CD4-positive, alpha-beta memory T cell (primary cell): ENCODE measurements at regions of chr2 and their contacts with region 1.

Region 1: DNA sequence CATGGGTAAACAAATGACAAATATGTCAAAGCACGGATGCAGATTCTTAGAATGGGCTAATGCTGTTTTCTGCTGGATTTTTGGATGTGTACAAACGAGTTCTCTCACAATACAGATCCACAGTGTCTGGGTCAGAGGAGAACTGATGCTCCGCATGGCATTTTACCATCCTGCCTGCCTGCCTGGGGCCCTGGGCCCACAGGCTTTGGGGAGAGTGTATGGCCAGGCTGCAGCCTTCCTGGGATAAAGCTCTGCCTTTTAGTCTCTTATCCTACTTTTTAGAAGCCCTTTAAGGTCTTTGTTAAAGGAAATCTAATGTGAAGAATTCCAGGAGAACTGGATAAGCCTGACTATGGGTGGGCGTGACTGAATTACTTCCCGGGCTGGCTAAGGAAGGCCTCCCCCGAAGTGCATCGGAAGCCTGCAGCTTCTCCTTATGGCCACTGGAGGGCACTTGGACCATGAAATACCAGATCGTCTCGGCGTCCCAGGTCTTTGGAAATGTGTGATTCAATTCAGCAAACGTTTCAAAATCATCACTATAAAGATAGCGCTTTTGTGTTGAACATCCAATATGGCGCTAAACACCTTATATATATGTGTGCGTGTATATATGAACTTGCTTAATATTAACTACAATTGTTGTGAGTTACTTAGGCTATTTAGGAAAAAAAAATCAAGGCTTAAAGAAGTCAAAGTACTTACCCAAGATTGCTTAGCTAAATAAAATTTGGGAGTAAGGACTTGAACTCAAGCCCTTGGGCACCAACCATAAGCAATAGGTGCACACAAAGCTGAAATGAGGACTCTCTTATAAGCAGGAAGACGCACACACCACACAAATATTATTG is 15.2 kb upstream of the DNPEP start:
- DNase-seq: peak; percentile 51 to 66 (median 58)
- H3K4me3 ChIP-seq: no peak overlapping the region
- H3K4me3 Mint-ChIP-seq: no peak overlapping the region
- H3K27ac ChIP-seq: no peak overlapping the region
- H3K27ac Mint-ChIP-seq: no peak overlapping the region
- H3K4me1 ChIP-seq: no peaks in the 10 kb centered on the region
- H3K4me1 Mint-ChIP-seq: peaks cover 0 to 7% (median 4%) of the 10 kb centered on the region in 4 donors
- H3K27me3 ChIP-seq: no peaks in the 10 kb centered on the region
- H3K27me3 Mint-ChIP-seq: peaks cover 2 to 4% of the 10 kb centered on the region in 2 donors

Region 2: DNA sequence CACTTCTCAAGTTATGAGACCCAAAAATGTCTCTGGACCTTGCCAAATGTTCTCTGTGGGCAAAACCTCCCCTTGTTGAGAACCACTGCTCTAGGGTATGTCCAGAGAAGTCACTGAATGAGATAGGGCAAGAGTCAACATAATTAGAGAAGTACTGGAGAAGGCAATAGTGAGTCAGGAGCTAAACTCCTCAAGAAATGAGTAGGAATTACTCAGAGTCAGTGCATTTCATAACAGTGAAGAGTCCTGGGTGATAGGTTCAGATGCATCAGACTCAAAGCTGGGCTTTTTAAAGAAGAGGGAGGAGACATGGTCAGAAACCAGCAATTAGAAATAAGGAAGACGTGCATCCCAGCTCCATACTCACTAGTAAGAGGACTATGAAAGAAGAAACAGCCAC is 303.6 kb before region 1 on chr2:
- CTCF ChIA-PET with region 1: no interaction called
- POLR2A ChIA-PET with region 1: no interaction called
- intact Hi-C with region 1: no loop called
- DNase-seq: no peak
- H3K4me3 ChIP-seq: no peak overlapping the region
- H3K4me3 Mint-ChIP-seq: no peak overlapping the region
- H3K27ac ChIP-seq: no peak overlapping the region
- H3K27ac Mint-ChIP-seq: no peak overlapping the region
- H3K4me1 ChIP-seq: no peaks in the 10 kb centered on the region
- H3K4me1 Mint-ChIP-seq: peaks cover 0 to 5% (median 0%) of the 10 kb centered on the region in 4 donors
- H3K27me3 ChIP-seq: no peaks in the 10 kb centered on the region
- H3K27me3 Mint-ChIP-seq: no peaks in the 10 kb centered on the region

Region 3: GRCh38 chr2:219433666-219434467 is 31.0 kb after region 1 on chr2:
- CTCF ChIA-PET with region 1: interaction called, 8 read pairs
- POLR2A ChIA-PET with region 1: no interaction called
- intact Hi-C with region 1: loop called (anchors 1 kb)
- DNase-seq: peak in 1 of 5 donors; percentile 19
- H3K4me3 ChIP-seq: no peak overlapping the region
- H3K4me3 Mint-ChIP-seq: peak overlapping the region in 1 of 8 donors; percentile 41
- H3K27ac ChIP-seq: no peak overlapping the region
- H3K27ac Mint-ChIP-seq: no peak overlapping the region
- H3K4me1 ChIP-seq: no peaks in the 10 kb centered on the region
- H3K4me1 Mint-ChIP-seq: peaks cover 0 to 7% (median 3%) of the 10 kb centered on the region in 4 donors
- H3K27me3 ChIP-seq: peaks cover 10% of the 10 kb centered on the region
- H3K27me3 Mint-ChIP-seq: peaks cover 6 to 15% of the 10 kb centered on the region in 2 donors

Region 4: GRCh38 chr2:219441451-219442255 is 38.8 kb after region 1 on chr2:
- CTCF ChIA-PET with region 1: interaction called, 13 read pairs
- POLR2A ChIA-PET with region 1: no interaction called
- intact Hi-C with region 1: no loop called
- DNase-seq: peak; percentile 41 to 57 (median 44)
- H3K4me3 ChIP-seq: peak overlapping the region in 1 of 2 donors; percentile 47
- H3K4me3 Mint-ChIP-seq: peak overlapping the region; percentile 70 to 89 (median 78)
- H3K27ac ChIP-seq: no peak overlapping the region
- H3K27ac Mint-ChIP-seq: peak overlapping the region in 2 of 7 donors; percentile 17 to 75
- H3K4me1 ChIP-seq: peaks cover 7% of the 10 kb centered on the region
- H3K4me1 Mint-ChIP-seq: peaks cover 6 to 18% (median 14%) of the 10 kb centered on the region in 4 donors
- H3K27me3 ChIP-seq: no peaks in the 10 kb centered on the region
- H3K27me3 Mint-ChIP-seq: peaks cover 3 to 16% of the 10 kb centered on the region in 2 donors

Region 5: DNA sequence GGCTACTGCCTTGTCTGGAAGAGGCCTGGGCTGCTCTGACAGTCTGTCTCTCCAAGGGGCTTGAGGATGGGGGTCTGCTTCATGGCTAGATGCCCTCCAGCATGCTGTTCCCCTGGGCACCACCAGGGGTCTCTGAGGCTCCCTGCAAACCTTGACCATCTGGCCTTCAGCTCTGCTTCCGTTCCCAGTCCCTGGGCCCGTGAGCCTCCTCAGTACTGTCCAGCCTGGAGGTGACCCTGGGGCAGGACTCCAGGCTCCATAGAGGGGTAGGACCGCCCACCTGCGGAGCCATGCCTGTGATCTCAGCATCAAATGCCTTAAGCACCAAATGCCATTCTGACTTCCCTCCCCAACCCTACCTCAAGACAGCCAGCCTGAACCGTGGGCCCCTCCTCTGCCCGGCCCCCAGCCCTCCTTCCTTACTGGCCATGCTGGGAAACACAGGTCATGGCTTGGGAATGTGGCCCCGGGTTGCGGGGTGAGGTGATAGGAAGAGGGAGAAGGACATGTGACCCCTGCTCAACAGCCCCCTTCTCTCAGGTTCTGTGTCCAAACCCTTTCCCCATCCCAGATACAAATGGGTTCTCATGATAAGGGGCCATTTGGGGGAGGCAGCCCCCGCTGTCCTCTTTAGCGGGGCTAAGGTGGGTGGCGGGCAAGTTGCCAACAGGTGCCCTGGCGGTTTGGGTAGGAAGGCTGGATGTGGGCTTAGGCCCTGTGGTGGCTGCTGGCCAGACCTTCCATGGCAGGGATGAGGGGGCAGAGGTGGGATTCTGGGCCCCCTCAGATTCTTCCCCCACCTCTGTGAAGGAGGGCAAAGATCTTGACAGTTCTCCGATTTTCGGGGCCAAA is 56.8 kb after region 1 on chr2:
- CTCF ChIA-PET with region 1: interaction called, 6 read pairs
- POLR2A ChIA-PET with region 1: no interaction called
- intact Hi-C with region 1: loop called (anchors 1 kb)
- DNase-seq: peak in 1 of 5 donors; percentile 36
- H3K4me3 ChIP-seq: no peak overlapping the region
- H3K4me3 Mint-ChIP-seq: no peak overlapping the region
- H3K27ac ChIP-seq: no peak overlapping the region
- H3K27ac Mint-ChIP-seq: no peak overlapping the region
- H3K4me1 ChIP-seq: no peaks in the 10 kb centered on the region
- H3K4me1 Mint-ChIP-seq: peaks cover 5 to 7% (median 6%) of the 10 kb centered on the region in 4 donors
- H3K27me3 ChIP-seq: no peaks in the 10 kb centered on the region
- H3K27me3 Mint-ChIP-seq: peaks cover 0 to 4% of the 10 kb centered on the region in 2 donors

Region 6: GRCh38 chr2:219642465-219643080 is 239.7 kb after region 1 on chr2:
- CTCF ChIA-PET with region 1: interaction called, 3 read pairs
- POLR2A ChIA-PET with region 1: no interaction called
- intact Hi-C with region 1: loop called (anchors 1 kb)
- DNase-seq: peak; percentile 80 to 88 (median 83)
- H3K4me3 ChIP-seq: no peak overlapping the region
- H3K4me3 Mint-ChIP-seq: no peak overlapping the region
- H3K27ac ChIP-seq: no peak overlapping the region
- H3K27ac Mint-ChIP-seq: peak overlapping the region in 4 of 7 donors; percentile 32 to 70 (median 53)
- H3K4me1 ChIP-seq: no peaks in the 10 kb centered on the region
- H3K4me1 Mint-ChIP-seq: peaks cover 0 to 6% (median 4%) of the 10 kb centered on the region in 4 donors
- H3K27me3 ChIP-seq: no peaks in the 10 kb centered on the region
- H3K27me3 Mint-ChIP-seq: peaks cover 12 to 36% of the 10 kb centered on the region in 2 donors